ENCODE measurements at regions of chr10 and their contacts with region 1.

Region 1: GRCh38 chr10:3472287-3473051 is 299.9 kb upstream of the PITRM1 start:
- DNase-seq: no peak
- H3K4me3 ChIP-seq: peak overlapping the region; percentile 29 to 42
- H3K27ac ChIP-seq: peak overlapping the region; percentile 62 to 63
- H3K4me1 ChIP-seq: peaks cover 7 to 52% (median 33%) of the 10 kb centered on the region in 4 donors
- H3K27me3 ChIP-seq: no peaks in the 10 kb centered on the region
- CTCF ChIP-seq: no peak

Region 2: GRCh38 chr10:3372281-3372680 is 100.2 kb before region 1 on chr10:
- intact Hi-C with region 1: no loop called
- DNase-seq: no peak
- H3K4me3 ChIP-seq: no peak overlapping the region
- H3K27ac ChIP-seq: peak overlapping the region; percentile 18 to 66
- H3K4me1 ChIP-seq: peaks cover 0 to 7% (median 0%) of the 10 kb centered on the region in 4 donors
- H3K27me3 ChIP-seq: no peaks in the 10 kb centered on the region
- CTCF ChIP-seq: no peak

Region 3: DNA sequence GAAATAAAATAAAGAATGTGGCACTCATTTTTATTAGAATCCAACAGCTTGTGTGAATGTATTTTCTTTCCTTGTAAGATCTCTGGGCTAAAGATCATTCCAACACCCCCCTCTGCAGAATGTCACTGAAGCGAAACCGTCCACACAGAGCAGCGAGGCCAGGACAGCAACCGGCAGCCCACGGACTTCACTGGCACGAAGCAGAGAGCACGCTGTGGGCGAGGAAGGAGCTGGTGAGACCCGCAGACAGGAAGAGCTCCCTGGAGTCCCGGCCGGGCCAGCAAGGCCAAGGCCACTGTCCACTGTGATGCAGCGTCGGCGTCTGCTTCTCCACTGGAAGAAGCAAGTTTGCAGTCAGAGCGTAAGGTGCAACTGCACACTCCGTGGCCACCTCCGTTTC is 112.9 kb after region 1 on chr10:
- intact Hi-C with region 1: no loop called
- DNase-seq: no peak
- H3K4me3 ChIP-seq: no peak overlapping the region
- H3K27ac ChIP-seq: no peak overlapping the region
- H3K4me1 ChIP-seq: no peaks in the 10 kb centered on the region
- H3K27me3 ChIP-seq: no peaks in the 10 kb centered on the region
- CTCF ChIP-seq: no peak

Region 4: GRCh38 chr10:4046030-4046429 is 573.6 kb after region 1 on chr10:
- intact Hi-C with region 1: loop called (anchors 10 kb)
- DNase-seq: no peak
- H3K4me3 ChIP-seq: no peak overlapping the region
- H3K27ac ChIP-seq: peak overlapping the region; percentile 21 to 86
- H3K4me1 ChIP-seq: peaks cover 0 to 56% (median 22%) of the 10 kb centered on the region in 4 donors
- H3K27me3 ChIP-seq: no peaks in the 10 kb centered on the region
- CTCF ChIP-seq: no peak

Measured in tibial artery (tissue), 4 donors.